Transverse colon (tissue), 4 donors: ENCODE measurements at regions of chr15 and their contacts with region 1.

Region 1: DNA sequence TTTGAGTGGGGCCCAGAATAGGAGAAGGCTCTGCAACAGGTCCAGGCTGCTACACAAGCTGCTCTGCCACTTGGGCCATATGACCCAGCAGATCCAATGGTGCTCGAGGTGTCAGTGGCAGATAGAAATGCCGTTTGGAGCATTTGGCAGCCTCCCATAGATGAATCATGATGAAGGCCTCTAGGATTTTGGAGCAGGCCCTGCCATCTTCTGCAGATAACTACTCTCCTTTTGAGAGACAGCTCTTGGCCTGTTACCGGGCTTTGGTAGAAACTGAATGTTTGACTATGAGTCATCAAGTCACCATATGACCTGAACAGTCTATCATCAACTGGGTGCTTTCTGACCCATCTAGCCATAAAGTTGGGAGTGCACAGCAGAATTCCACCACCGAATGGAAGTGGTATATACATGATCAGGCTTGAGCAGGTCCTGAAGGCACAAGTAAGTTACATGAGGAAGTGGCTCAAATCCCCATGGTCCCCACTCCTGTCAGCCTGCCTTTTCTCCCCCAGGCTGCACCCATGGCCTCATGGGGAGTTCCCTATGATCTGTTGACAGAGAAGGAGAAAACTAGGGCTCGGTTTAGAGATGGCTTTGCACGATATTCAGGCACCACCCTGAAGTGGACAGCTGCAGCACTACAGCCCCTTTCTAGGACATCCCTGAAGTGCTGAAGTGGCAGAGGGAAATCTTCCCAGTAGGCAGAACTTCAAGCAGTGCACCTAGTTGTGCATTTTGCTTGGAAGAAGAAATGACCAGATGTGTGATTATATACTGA is 971.4 kb downstream of the MCTP2 start:
- DNase-seq: no peak
- H3K4me3 ChIP-seq: no peak overlapping the region
- H3K27ac ChIP-seq: no peak overlapping the region
- H3K4me1 ChIP-seq: no peaks in the 10 kb centered on the region
- H3K27me3 ChIP-seq: no peaks in the 10 kb centered on the region
- CTCF ChIP-seq: no peak
- EP300 ChIP-seq: no peak
- POLR2A ChIP-seq: no peak

Region 2: DNA sequence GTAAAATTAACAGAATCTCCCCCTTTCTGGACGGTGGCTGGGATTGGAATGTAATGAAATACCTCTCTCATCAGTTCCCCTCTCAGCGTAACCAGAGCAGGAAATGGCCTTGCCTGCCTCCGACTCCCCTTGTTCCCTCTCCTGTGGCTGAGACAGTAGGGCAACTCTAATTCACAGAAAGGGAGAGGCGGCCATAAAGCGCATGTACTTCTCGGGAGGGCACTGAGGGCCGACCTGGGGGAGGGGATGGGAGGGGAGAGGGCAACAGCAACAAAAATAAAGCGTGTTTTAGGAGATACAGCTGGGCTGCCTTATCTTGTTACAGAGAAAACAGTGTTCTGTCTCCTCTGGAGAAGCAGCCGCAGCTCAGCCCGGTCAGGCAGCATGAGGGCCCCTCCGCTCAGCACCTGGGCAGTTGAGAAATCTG is 1974.4 kb after region 1 on chr15:
- in situ Hi-C with region 1: no loop called
- intact Hi-C with region 1: loop called (anchors 5 kb)
- DNase-seq: no peak
- H3K4me3 ChIP-seq: no peak overlapping the region
- H3K27ac ChIP-seq: no peak overlapping the region
- H3K4me1 ChIP-seq: no peaks in the 10 kb centered on the region
- H3K27me3 ChIP-seq: no peaks in the 10 kb centered on the region
- CTCF ChIP-seq: no peak
- EP300 ChIP-seq: no peak
- POLR2A ChIP-seq: no peak